ENCODE measurements at regions of chr2 and their contacts with region 1.

Region 1: DNA sequence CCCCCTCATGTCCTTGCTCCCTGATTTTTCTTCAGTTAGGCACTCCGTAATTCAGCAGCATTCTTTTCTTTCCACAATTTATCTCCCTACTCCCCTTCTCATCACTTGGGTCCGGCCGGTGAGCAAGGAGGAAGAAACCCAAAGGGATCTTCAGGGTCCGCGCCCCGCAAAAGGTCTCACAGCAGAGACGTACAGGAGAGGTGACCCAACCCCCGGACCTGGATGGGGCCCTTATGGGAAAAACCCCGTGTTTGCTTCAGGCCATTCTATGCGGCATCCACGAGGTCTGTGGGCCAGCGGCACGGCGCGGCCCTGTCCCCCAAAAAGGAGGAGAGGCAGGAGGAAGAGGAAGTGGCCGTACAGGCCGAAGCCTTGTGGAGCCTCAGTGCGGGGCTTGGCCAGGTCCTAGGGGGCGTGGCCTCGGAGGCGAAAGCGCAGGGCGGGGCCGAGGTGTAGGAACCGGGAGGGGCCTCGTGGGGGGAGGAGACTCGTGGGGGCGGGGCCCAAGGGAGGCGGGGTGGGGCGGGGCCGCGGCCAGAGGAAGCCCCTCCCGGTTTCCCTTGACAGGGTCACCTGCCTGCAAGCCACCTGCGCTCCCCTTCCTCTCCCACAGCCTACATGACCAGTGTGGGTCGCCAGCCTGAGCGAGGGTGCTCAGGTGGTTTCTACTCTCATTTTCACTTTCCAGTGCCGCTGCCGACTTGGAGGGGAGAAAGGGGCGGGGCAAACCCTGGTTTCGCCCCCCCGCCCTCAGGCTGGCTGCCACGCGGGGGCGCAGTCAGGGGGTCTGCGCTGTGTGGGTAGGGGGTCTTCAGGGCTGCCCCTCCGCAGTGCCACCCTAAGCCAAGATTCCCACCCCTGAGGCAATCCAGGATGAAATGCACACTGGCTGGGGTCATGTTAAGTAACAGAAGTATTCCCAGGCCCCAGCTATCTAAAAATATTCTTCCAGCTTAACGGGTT is 156.4 kb upstream of the XPO1 start:
- DNase-seq: peak; percentile 62 to 91 (median 77)
- ATAC-seq: peak; percentile 99
- H3K4me3 ChIP-seq: peak overlapping the region; percentile 74
- H3K4me3 Mint-ChIP-seq: peak overlapping the region; percentile 84 to 96 (median 91)
- H3K27ac ChIP-seq: peak overlapping the region; percentile 62
- H3K27ac Mint-ChIP-seq: peak overlapping the region; percentile 74 to 92 (median 87)
- H3K4me1 ChIP-seq: peaks cover 0 to 5% of the 10 kb centered on the region in 2 donors
- H3K4me1 Mint-ChIP-seq: peaks cover 4 to 19% (median 15%) of the 10 kb centered on the region in 7 donors
- H3K27me3 ChIP-seq: no peaks in the 10 kb centered on the region
- H3K27me3 Mint-ChIP-seq: peaks cover 0 to 4% (median 0%) of the 10 kb centered on the region in 5 donors

Region 2: GRCh38 chr2:61016808-61017555 is 677.6 kb before region 1 on chr2:
- CTCF ChIA-PET with region 1: no interaction called
- POLR2A ChIA-PET with region 1: no interaction called
- intact Hi-C with region 1: loop called in 1 of 2 experiments (anchors 1 kb)
- DNase-seq: peak; percentile 41 to 75 (median 72)
- ATAC-seq: peak; percentile 79
- H3K4me3 ChIP-seq: peak overlapping the region; percentile 100
- H3K4me3 Mint-ChIP-seq: peak overlapping the region; percentile 93 to 100 (median 97)
- H3K27ac ChIP-seq: peak overlapping the region; percentile 75
- H3K27ac Mint-ChIP-seq: peak overlapping the region; percentile 90 to 99 (median 95)
- H3K4me1 ChIP-seq: peaks cover 14 to 20% of the 10 kb centered on the region in 2 donors
- H3K4me1 Mint-ChIP-seq: peaks cover 23 to 68% (median 48%) of the 10 kb centered on the region in 7 donors
- H3K27me3 ChIP-seq: no peaks in the 10 kb centered on the region
- H3K27me3 Mint-ChIP-seq: no peaks in the 10 kb centered on the region

Region 3: GRCh38 chr2:61176755-61177726 is 517.6 kb before region 1 on chr2:
- CTCF ChIA-PET with region 1: no interaction called
- POLR2A ChIA-PET with region 1: no interaction called
- intact Hi-C with region 1: loop called (anchors 10 kb)
- DNase-seq: peak; percentile 89 to 97 (median 93)
- ATAC-seq: peak; percentile 95
- H3K4me3 ChIP-seq: peak overlapping the region; percentile 82
- H3K4me3 Mint-ChIP-seq: peak overlapping the region; percentile 90 to 100 (median 94)
- H3K27ac ChIP-seq: peak overlapping the region; percentile 97
- H3K27ac Mint-ChIP-seq: peak overlapping the region; percentile 89 to 97 (median 95)
- H3K4me1 ChIP-seq: peaks cover 27 to 41% of the 10 kb centered on the region in 2 donors
- H3K4me1 Mint-ChIP-seq: peaks cover 38 to 53% (median 48%) of the 10 kb centered on the region in 7 donors
- H3K27me3 ChIP-seq: no peaks in the 10 kb centered on the region
- H3K27me3 Mint-ChIP-seq: peaks cover 0 to 8% (median 0%) of the 10 kb centered on the region in 5 donors

Region 4: GRCh38 chr2:61318553-61318952 is 376.0 kb before region 1 on chr2:
- CTCF ChIA-PET with region 1: no interaction called
- POLR2A ChIA-PET with region 1: no interaction called
- intact Hi-C with region 1: no loop called
- DNase-seq: no peak
- ATAC-seq: no peak
- H3K4me3 ChIP-seq: no peak overlapping the region
- H3K4me3 Mint-ChIP-seq: no peak overlapping the region
- H3K27ac ChIP-seq: no peak overlapping the region
- H3K27ac Mint-ChIP-seq: no peak overlapping the region
- H3K4me1 ChIP-seq: no peaks in the 10 kb centered on the region
- H3K4me1 Mint-ChIP-seq: peaks cover 0 to 4% (median 0%) of the 10 kb centered on the region in 7 donors
- H3K27me3 ChIP-seq: no peaks in the 10 kb centered on the region
- H3K27me3 Mint-ChIP-seq: no peaks in the 10 kb centered on the region

Region 5: DNA sequence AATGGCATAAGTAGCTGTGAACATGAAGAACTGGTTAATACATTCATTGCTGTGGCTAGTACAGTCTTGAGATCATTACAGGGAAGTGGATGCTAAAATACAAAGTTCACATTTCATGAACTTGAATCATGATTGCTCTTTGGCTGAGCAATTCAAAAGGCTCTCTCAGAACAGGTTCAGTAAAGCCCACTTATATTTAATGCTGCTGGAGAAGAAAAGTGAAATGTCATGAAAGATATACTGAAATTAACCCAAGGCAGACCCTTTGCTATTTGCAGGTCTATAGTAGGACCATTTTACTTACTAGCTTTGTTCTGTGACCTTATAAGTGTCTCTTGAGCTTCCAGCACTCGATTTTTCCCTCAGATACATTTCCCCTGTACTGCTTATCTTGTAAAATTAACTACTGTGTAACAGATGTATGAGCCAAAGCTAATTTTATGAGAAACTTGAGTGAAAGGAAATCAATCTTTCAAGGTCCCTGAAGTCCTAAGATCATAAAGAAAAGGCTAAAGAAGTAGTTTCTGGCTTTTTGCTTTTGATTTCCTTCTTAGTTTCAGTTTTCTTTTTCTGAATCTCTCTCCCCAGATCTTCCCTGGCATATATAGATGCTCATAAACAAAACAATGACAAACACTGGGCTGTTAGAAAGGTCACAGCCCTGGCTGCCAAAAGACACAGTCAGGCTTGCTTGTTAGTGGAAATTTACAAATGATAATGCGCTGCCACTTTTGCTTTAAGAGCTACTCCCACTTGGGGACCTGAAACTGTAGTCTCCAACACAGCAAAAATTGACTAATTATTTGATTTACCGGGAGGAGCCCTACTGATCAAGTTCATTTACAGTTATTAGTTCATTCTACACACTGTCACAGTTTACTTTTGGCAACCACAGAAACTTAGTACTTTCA is 23.7 kb before region 1 on chr2:
- CTCF ChIA-PET with region 1: no interaction called
- POLR2A ChIA-PET with region 1: no interaction called
- intact Hi-C with region 1: loop called in 1 of 2 experiments (anchors 1 kb)
- DNase-seq: peak in 2 of 9 donors; percentile 3 to 13
- ATAC-seq: peak; percentile 36
- H3K4me3 ChIP-seq: peak overlapping the region; percentile 29
- H3K4me3 Mint-ChIP-seq: peak overlapping the region; percentile 2 to 88 (median 70)
- H3K27ac ChIP-seq: peak overlapping the region; percentile 52
- H3K27ac Mint-ChIP-seq: peak overlapping the region; percentile 26 to 95 (median 74)
- H3K4me1 ChIP-seq: peaks cover 3 to 10% of the 10 kb centered on the region in 2 donors
- H3K4me1 Mint-ChIP-seq: peaks cover 9 to 20% (median 18%) of the 10 kb centered on the region in 7 donors
- H3K27me3 ChIP-seq: no peaks in the 10 kb centered on the region
- H3K27me3 Mint-ChIP-seq: no peaks in the 10 kb centered on the region

Region 6: DNA sequence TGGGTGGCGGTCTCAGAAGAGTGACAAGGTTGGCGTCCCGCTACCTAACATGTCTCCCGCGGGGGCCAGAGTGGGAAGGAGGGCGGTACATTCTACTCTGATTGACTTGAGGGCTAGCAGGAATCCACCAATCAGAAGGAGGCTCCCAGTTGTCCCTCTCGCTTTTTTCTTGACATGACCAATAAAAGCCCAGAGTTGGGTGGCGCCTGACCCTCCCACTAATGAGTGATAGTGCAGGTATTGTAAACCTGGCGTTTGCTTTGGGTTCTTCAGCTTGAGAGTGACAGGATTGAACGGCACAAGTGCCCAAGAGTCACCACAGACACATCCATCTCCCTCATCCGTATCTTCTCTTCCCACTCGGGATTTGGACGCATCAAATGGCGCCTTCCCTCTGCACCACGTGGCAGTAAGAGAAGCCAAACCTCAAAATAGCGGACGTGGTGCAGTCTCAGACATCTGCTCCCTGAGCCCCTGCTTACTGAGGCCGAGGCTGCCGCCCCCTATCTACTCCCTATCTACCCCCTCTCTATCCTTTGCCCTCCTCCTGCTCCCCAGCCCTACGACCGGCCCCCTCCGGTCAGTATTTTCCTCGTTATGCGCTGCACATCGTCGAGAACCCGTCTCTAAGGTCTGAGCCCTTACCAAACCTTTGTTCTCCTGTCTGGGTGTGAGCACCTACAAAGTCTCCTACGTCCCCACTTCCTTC is 160.0 kb after region 1 on chr2:
- CTCF ChIA-PET with region 1: no interaction called
- POLR2A ChIA-PET with region 1: no interaction called
- intact Hi-C with region 1: loop called (anchors 1 kb)
- DNase-seq: peak; percentile 61 to 96 (median 94)
- ATAC-seq: peak; percentile 95
- H3K4me3 ChIP-seq: peak overlapping the region; percentile 100
- H3K4me3 Mint-ChIP-seq: peak overlapping the region; percentile 92 to 99 (median 96)
- H3K27ac ChIP-seq: peak overlapping the region; percentile 77
- H3K27ac Mint-ChIP-seq: peak overlapping the region; percentile 90 to 98 (median 95)
- H3K4me1 ChIP-seq: peaks cover 4 to 6% of the 10 kb centered on the region in 2 donors
- H3K4me1 Mint-ChIP-seq: peaks cover 10 to 27% (median 17%) of the 10 kb centered on the region in 7 donors
- H3K27me3 ChIP-seq: no peaks in the 10 kb centered on the region
- H3K27me3 Mint-ChIP-seq: no peaks in the 10 kb centered on the region

Measured in naive thymus-derived CD4-positive, alpha-beta T cell (primary cell).